ENCODE measurements at regions of chr7 and their contacts with region 1.

Region 1: GRCh38 chr7:76291343-76292212 is 10.9 kb upstream of the HSPB1 start:
- DNase-seq: peak; percentile 78 to 91
- ATAC-seq: peak; percentile 86 to 97 (median 91)
- H3K4me3 ChIP-seq: no peak overlapping the region
- H3K4me3 Mint-ChIP-seq: no peak overlapping the region
- H3K27ac ChIP-seq: no peak overlapping the region
- H3K27ac Mint-ChIP-seq: peak overlapping the region in 1 of 2 donors; percentile 73
- H3K4me1 ChIP-seq: peaks cover 9% of the 10 kb centered on the region
- H3K4me1 Mint-ChIP-seq: peaks cover 5 to 7% of the 10 kb centered on the region in 2 donors
- H3K27me3 ChIP-seq: no peaks in the 10 kb centered on the region
- H3K27me3 Mint-ChIP-seq: peaks cover 0 to 5% of the 10 kb centered on the region in 2 donors
- CTCF ChIP-seq: peak; percentile 96

Region 2: GRCh38 chr7:76359111-76359978 is 67.8 kb after region 1 on chr7:
- intact Hi-C with region 1: loop called (anchors 1 kb)
- DNase-seq: peak; percentile 91 to 98
- ATAC-seq: peak; percentile 91 to 97 (median 92)
- H3K4me3 ChIP-seq: peak overlapping the region; percentile 97
- H3K4me3 Mint-ChIP-seq: peak overlapping the region; percentile 86
- H3K27ac ChIP-seq: peak overlapping the region; percentile 99
- H3K27ac Mint-ChIP-seq: peak overlapping the region; percentile 92 to 99
- H3K4me1 ChIP-seq: peaks cover 10% of the 10 kb centered on the region
- H3K4me1 Mint-ChIP-seq: peaks cover 29 to 32% of the 10 kb centered on the region in 2 donors
- H3K27me3 ChIP-seq: no peaks in the 10 kb centered on the region
- H3K27me3 Mint-ChIP-seq: no peaks in the 10 kb centered on the region
- CTCF ChIP-seq: peak; percentile 63

Measured in natural killer cell (primary cell).